Lower leg skin (tissue), 4 donors: ENCODE measurements at regions of chr1 and their contacts with region 1.

Region 1: DNA sequence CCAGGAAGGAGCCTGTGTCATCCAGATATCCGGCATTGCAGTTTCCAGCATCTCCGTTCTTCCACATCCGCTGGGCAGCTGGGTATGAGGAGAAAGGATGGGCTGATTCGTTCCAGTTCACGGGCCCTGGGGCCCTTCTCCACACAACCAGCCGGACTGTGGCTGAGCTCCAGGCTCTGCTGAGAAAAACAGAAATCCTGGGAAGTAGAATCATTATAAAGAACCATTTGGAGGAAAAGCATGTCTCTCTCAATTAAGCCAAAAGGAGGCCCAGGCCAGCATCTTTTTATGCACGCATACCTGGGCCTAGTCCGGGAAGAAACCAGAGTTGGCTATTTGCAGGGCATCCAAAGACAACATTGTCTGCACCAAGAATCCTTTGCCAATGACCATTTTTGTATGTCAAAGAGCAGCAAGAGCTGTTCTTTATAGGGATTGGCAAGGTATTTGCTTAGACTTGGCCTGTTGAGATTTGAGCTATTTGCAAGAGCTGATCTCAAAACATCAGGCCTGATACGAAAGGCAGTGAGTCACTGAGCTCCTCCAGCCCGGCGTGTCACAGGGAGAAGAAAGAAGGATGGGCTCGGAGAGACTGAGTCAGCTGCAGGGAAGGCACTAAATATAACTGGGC is 84.9 kb upstream of the ARHGEF16 start:
- DNase-seq: peak in 1 of 2 donors; percentile 63
- H3K4me3 ChIP-seq: no peak overlapping the region
- CTCF ChIP-seq: no peak
- POLR2A ChIP-seq: no peak

Region 2: GRCh38 chr1:1540090-1540817 is 1829.3 kb before region 1 on chr1 and contains the start of gene TMEM240:
- intact Hi-C with region 1: loop called (anchors 5 kb)
- DNase-seq: peak; percentile 53 to 94
- H3K4me3 ChIP-seq: peak within 1 kb of the TSS; percentile 3
- CTCF ChIP-seq: no peak
- POLR2A ChIP-seq: no peak
- total RNA-seq, gene TMEM240: 0.57 to 2.6 (median 2.0) TPM in 3 of 4 donors, not detected in the other